BJ (cell line): ENCODE measurements at regions of chr5 and their contacts with region 1.

Region 1: DNA sequence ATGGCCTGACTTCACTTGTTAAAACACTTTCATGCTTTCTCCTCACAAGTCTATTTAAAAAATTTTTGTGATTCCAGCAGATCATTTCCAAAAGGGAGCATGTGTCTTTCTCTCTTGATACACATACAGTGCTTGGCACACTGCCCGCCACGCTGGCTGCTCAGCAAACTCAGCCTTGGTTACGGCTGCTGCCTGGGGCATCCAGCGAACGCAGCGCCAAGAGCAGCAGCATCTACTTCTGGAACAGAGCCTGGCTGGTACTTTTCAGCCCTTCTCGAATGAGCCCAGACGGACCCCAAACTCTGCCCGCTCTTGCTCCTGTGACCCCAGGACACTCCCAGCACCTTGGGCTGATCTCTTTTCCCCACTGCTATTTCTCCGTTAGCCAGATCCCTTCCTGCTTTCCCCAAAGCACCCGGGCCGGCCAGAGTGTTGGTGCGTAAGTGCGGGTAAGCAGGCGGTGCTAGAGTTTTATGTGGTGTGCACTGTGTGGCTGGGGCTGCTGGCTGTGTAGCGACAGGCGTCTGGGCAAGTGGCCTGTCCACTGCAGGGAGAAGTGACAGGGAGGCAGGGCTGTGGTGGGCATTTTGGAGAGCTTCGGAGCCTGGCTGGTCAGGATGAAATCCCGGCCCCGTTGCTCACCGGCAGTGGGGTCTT is 73.2 kb downstream of the SH3PXD2B start:
- DNase-seq: peak; percentile 23
- H3K4me3 ChIP-seq: no peak overlapping the region
- H3K27me3 ChIP-seq: no peaks in the 10 kb centered on the region
- CTCF ChIP-seq: no peak

Region 2: GRCh38 chr5:172235827-172236736 is 145.0 kb before region 1 on chr5:
- CTCF ChIA-PET with region 1: no interaction called
- POLR2A ChIA-PET with region 1: interaction called, 23 read pairs
- DNase-seq: no peak
- H3K4me3 ChIP-seq: no peak overlapping the region
- H3K27me3 ChIP-seq: no peaks in the 10 kb centered on the region
- CTCF ChIP-seq: no peak